Activated T-helper 1 cell treated with anti-CD3 and anti-CD28 coated beads, Interleukin-12 subunit alpha, Interleukin-12 subunit beta, Interleukin-2, Interleukin-4 antibody, amounts not matched to agents 30 ng/mL and 10 ng/mL and 1 ng/mL, durations not matched to agents 14 hours and 24 hours and 36 hours (primary cell): ENCODE measurements at regions of chr10 and their contacts with region 1.

Region 1: DNA sequence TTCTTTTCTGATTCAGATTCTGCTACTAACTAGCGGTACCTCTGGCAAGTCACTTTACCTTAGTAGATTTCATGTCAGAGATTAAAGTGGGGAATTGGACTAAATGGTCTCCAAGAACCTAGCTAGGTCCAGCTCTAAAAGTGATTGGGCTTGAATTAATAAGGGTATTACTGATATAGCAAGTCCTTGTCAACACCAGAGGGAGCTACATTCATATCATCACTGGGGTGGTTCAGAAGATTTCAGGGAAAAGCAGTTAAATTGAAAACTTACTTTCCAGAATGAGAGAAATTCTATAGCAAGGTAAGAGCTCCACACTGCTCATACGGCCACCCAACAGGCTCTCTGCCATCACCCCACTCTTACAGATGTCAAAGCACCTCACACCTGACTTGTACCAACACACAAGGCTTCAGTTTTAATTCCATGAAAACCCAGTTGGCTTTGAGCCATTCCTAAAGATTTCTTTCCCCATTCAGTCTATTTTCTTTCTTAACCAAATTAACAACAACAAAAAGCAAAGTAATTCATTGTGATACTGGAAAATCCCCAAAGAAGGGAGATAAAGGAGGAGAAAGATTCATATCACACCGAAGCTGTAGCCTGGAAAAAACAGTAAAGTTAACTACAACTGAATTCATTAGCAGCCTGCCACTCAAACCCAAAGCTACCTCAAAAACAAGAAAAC is 38.0 kb upstream of the SPOCK2 start:
- DNase-seq: no peak
- H3K4me3 Mint-ChIP-seq: no peak overlapping the region
- H3K27ac Mint-ChIP-seq: no peak overlapping the region
- H3K4me1 Mint-ChIP-seq: peaks cover 39% of the 10 kb centered on the region
- H3K27me3 Mint-ChIP-seq: no peaks in the 10 kb centered on the region

Region 2: GRCh38 chr10:71868192-71868697 is 258.1 kb before region 1 on chr10:
- intact Hi-C with region 1: no loop called
- DNase-seq: no peak
- H3K4me3 Mint-ChIP-seq: no peak overlapping the region
- H3K27ac Mint-ChIP-seq: no peak overlapping the region
- H3K4me1 Mint-ChIP-seq: no peaks in the 10 kb centered on the region
- H3K27me3 Mint-ChIP-seq: peaks cover 2% of the 10 kb centered on the region

Region 3: DNA sequence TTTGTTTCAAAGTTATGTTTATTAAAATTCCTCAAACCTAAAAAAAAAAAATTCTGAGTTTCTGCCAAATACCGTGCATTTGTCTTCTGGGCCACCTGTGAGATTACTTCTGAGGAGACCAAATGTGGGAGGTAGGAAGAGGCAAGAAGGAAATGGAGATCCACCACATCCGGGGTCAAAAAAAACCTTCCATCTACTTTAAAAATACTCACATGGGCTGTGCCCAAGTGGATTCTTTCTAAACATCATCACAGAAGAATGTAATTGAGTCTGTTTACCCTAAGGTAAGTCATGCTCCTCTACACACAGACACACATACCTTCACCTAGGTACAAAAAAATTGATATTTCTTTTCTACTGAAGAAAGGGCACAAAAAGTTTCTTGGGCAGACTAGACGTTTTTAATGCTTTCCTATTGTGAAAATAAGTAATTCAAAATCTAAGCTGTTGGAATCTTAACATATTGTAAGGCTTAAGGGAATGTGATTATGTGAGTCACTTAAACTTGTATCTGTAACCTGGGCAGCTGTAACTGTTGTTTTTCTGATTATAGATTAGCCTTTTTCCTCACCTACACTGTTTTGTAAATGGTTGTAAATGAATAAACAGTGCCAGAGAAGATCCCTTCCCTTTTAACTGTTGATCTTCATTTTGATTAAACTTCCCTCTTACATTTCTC is 18.9 kb before region 1 on chr10:
- intact Hi-C with region 1: loop called (anchors 1 kb)
- DNase-seq: no peak
- H3K4me3 Mint-ChIP-seq: peak overlapping the region; percentile 79
- H3K27ac Mint-ChIP-seq: peak overlapping the region; percentile 85
- H3K4me1 Mint-ChIP-seq: peaks cover 72% of the 10 kb centered on the region
- H3K27me3 Mint-ChIP-seq: peaks cover 2% of the 10 kb centered on the region

Region 4: DNA sequence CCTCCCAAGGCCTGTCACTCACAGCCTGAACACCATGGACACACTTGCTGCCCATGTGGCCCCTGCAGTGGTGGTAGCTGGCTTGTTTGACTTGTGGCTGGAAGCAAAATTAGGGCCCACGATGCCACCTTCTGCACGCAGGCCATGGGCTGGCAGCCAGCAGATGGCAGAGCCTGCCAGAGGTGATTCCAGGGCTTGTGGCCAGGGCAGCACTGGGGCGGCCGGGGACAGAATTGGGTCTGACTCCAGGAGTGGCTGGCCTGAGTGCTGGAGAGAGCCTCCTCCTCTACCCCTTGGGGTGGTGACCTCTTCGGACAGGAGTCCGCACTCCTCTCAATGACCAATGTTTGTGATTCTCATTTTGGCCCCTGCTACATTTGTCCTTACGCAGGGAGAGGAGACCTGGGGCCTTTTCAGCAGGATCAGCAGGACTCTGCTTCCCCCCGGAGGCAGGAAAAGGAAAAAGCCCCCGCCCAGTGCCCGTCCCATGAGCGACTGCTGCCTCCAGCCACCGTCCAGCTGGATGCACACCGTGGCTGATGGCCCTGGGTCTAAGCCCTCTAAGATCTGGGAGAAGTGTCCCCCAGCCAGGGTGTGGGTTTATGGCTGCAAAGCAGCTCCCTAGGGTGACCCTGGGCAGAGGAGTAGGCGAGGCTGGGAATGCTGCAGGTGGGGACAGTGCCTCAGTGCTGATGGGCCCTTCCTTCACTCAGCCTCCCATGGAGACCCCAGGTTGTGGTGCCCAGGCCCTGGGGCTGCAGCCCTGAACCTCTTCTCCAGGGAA is 201.9 kb after region 1 on chr10:
- intact Hi-C with region 1: loop called (anchors 2 kb)
- DNase-seq: no peak
- H3K4me3 Mint-ChIP-seq: peak overlapping the region; percentile 99
- H3K27ac Mint-ChIP-seq: peak overlapping the region; percentile 84
- H3K4me1 Mint-ChIP-seq: peaks cover 62% of the 10 kb centered on the region
- H3K27me3 Mint-ChIP-seq: no peaks in the 10 kb centered on the region

Region 5: GRCh38 chr10:72340510-72341261 is 214.4 kb after region 1 on chr10:
- intact Hi-C with region 1: loop called (anchors 2 kb)
- DNase-seq: peak; percentile 75
- H3K4me3 Mint-ChIP-seq: no peak overlapping the region
- H3K27ac Mint-ChIP-seq: no peak overlapping the region
- H3K4me1 Mint-ChIP-seq: peaks cover 40% of the 10 kb centered on the region
- H3K27me3 Mint-ChIP-seq: no peaks in the 10 kb centered on the region